T-cell (primary cell): ENCODE measurements at regions of chr15 and their contacts with region 1.

Region 1: DNA sequence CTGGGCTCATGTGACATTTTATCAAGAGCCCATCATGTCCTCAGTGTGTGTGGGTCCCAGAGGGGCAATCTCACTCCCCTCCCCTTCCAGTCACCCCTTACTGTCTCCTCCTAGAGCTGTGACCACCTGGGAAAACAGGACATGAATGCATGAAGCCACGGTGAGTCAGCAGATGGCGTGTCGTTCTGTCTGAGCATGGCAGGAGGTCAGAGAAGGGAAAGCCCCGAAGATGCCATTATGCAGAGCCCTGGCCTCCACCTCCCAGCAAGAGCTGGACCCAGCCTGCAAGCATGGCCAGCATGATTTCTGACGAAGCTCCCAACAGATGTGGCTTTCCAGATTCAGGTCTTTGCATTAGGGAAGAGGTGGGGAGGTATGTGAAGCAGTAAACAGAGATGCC is 118.5 kb downstream of the TLE3 start:
- DNase-seq: no peak
- ATAC-seq: no peak
- H3K4me3 ChIP-seq: no peak overlapping the region
- H3K4me3 Mint-ChIP-seq: no peak overlapping the region
- H3K27ac ChIP-seq: no peak overlapping the region
- H3K27ac Mint-ChIP-seq: no peak overlapping the region
- H3K4me1 ChIP-seq: no peaks in the 10 kb centered on the region
- H3K4me1 Mint-ChIP-seq: no peaks in the 10 kb centered on the region
- H3K27me3 ChIP-seq: peaks cover 0 to 37% of the 10 kb centered on the region in 2 experiments
- H3K27me3 Mint-ChIP-seq: peaks cover 0 to 37% of the 10 kb centered on the region in 2 donors

Region 2: DNA sequence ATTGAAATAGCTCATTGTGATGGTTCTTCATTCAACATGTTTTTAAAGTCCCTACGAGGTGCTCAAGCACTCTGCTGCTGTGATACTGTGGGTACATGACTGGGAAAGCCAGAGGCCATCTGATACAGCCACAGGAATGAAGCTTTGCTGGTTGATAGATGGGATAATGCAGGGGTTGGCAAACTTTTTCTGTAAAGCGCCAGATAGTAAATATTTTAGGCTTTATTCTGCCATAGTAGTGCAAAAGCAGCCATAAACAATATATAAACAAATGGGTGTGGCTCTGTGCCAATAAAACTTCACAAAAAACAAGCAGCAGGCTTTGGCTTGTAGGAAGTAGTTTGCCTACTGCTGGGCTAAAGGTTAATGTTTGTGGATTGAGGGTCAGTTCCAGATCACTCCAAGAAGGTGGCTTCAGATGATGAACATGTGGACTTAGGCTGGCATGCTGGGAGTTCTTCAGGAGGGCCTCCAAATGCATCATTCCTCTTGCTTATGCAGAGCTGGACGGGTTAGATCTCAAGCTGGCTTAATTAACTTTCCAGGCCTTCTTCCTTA is 221.0 kb before region 1 on chr15:
- CTCF ChIA-PET with region 1: no interaction called
- POLR2A ChIA-PET with region 1: interaction called in 1 of 2 experiments, 10 read pairs
- DNase-seq: no peak
- ATAC-seq: no peak
- H3K4me3 ChIP-seq: peak overlapping the region; percentile 3 to 10
- H3K4me3 Mint-ChIP-seq: peak overlapping the region; percentile 49 to 68 (median 52)
- H3K27ac ChIP-seq: no peak overlapping the region
- H3K27ac Mint-ChIP-seq: peak overlapping the region; percentile 75 to 79
- H3K4me1 ChIP-seq: peaks cover 76 to 87% of the 10 kb centered on the region in 2 experiments
- H3K4me1 Mint-ChIP-seq: peaks cover 97 to 100% (median 98%) of the 10 kb centered on the region in 3 donors
- H3K27me3 ChIP-seq: peaks cover 0 to 12% of the 10 kb centered on the region in 2 experiments
- H3K27me3 Mint-ChIP-seq: peaks cover 2 to 4% of the 10 kb centered on the region in 2 donors

Region 3: GRCh38 chr15:69994429-69995201 is 15.4 kb after region 1 on chr15:
- CTCF ChIA-PET with region 1: no interaction called
- POLR2A ChIA-PET with region 1: no interaction called
- DNase-seq: no peak
- ATAC-seq: no peak
- H3K4me3 ChIP-seq: no peak overlapping the region
- H3K4me3 Mint-ChIP-seq: no peak overlapping the region
- H3K27ac ChIP-seq: no peak overlapping the region
- H3K27ac Mint-ChIP-seq: no peak overlapping the region
- H3K4me1 ChIP-seq: no peaks in the 10 kb centered on the region
- H3K4me1 Mint-ChIP-seq: no peaks in the 10 kb centered on the region
- H3K27me3 ChIP-seq: peaks cover 0 to 13% of the 10 kb centered on the region in 2 experiments
- H3K27me3 Mint-ChIP-seq: peaks cover 0 to 2% of the 10 kb centered on the region in 2 donors